GM12878 (cell line): ENCODE measurements at regions of chr7 and their contacts with region 1.

Region 1: GRCh38 chr7:143096146-143096545 is 35.7 kb upstream of the PIP start:
- DNase-seq: no peak
- ATAC-seq: no peak
- H3K4me3 ChIP-seq: no peak overlapping the region
- H3K27ac ChIP-seq: no peak overlapping the region
- H3K4me1 ChIP-seq: no peaks in the 10 kb centered on the region
- H3K27me3 ChIP-seq: no peaks in the 10 kb centered on the region
- CTCF ChIP-seq: no peak
- EP300 ChIP-seq: no peak
- POLR2A ChIP-seq: no peak
- RAD21 ChIP-seq: no peak

Region 2: GRCh38 chr7:143147072-143147694 is 51.0 kb after region 1 on chr7:
- CTCF ChIA-PET with region 1: no interaction called
- POLR2A ChIA-PET with region 1: no interaction called
- RAD21 ChIA-PET with region 1: no interaction called
- SMC1A ChIA-PET with region 1: no interaction called
- in situ Hi-C with region 1: no loop called
- intact Hi-C with region 1: loop called (anchors 5 kb)
- DNase-seq: no peak
- ATAC-seq: no peak
- H3K4me3 ChIP-seq: no peak overlapping the region
- H3K27ac ChIP-seq: no peak overlapping the region
- H3K4me1 ChIP-seq: no peaks in the 10 kb centered on the region
- H3K27me3 ChIP-seq: no peaks in the 10 kb centered on the region
- CTCF ChIP-seq: no peak
- EP300 ChIP-seq: no peak
- POLR2A ChIP-seq: no peak
- RAD21 ChIP-seq: no peak